SK-N-SH (cell line): ENCODE measurements at regions of chr5 and their contacts with region 1.

Region 1: GRCh38 chr5:139968547-139969261 is 74.4 kb downstream of the NRG2 start:
- DNase-seq: peak; percentile 91
- H3K4me3 ChIP-seq: peak overlapping the region in 1 of 2 experiments; percentile 28; a peak in 1 of 4 replicates
- H3K27ac ChIP-seq: no peak overlapping the region
- H3K4me1 ChIP-seq: peaks cover 0 to 16% of the 10 kb centered on the region in 2 experiments; a peak in 1 of 4 replicates
- H3K27me3 ChIP-seq: no peaks in the 10 kb centered on the region
- CTCF ChIP-seq: peak; percentile 97
- EP300 ChIP-seq: no peak
- RAD21 ChIP-seq: peak; percentile 99

Region 2: DNA sequence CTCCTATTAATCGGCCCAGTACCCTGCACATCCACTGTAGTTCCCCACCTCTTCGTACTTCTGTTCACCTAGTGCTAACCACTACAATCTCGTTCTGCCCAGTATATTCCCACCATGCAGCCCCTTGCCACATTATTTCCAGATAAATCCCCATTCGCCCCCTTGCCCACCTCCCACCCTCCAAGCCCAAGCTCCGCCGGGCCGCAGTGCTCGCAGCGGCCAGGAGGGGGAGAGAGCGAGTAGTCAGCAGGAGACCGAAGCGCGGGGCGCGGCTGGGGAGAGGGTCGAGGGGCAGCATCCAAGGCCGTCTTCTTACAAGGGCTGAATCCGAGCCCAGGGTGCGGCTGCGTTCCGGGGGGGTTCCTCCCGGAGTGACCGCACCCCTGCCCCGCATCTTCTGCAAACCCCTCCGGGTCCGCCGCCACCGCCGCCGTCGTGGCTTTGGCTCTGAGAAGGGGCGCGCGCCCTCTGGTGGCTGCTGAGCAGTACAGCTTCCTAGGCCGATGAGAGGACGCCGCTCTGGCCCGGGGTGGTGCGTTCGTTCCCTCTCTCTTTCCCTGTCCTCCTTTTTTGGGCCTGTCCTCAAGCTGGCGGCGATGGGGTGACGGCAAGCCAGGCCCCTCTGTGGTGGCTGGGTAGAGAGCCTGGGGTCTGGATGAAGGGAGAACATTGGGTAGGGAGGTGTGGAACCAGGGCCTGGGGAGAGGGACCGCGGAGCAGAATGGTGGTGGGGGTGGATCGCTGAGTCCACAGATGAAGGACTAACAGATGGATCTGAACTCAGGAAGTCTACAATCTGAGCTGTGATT is 203.1 kb before region 1 on chr5:
- CTCF ChIA-PET with region 1: interaction called, 96 read pairs
- POLR2A ChIA-PET with region 1: no interaction called
- DNase-seq: peak; percentile 93
- H3K4me3 ChIP-seq: peak overlapping the region; percentile 56 to 85
- H3K27ac ChIP-seq: peak overlapping the region in 1 of 2 experiments; percentile 56; a peak in 1 of 4 replicates
- H3K4me1 ChIP-seq: peaks cover 2 to 29% of the 10 kb centered on the region in 2 experiments; a peak in 3 of 4 replicates
- H3K27me3 ChIP-seq: no peaks in the 10 kb centered on the region
- CTCF ChIP-seq: peak; percentile 97
- EP300 ChIP-seq: peak in 1 of 2 experiments; percentile 14; a peak in 1 of 4 replicates
- RAD21 ChIP-seq: peak; percentile 73

Region 3: GRCh38 chr5:139814675-139815280 is 153.9 kb before region 1 on chr5:
- CTCF ChIA-PET with region 1: interaction called, 14 read pairs
- POLR2A ChIA-PET with region 1: no interaction called
- DNase-seq: peak; percentile 63
- H3K4me3 ChIP-seq: no peak overlapping the region
- H3K27ac ChIP-seq: no peak overlapping the region
- H3K4me1 ChIP-seq: peaks cover 0 to 4% of the 10 kb centered on the region in 2 experiments; a peak in 1 of 4 replicates
- H3K27me3 ChIP-seq: peaks cover 4% of the 10 kb centered on the region; the same call in 1 of the 2 replicates
- CTCF ChIP-seq: no peak
- EP300 ChIP-seq: no peak
- RAD21 ChIP-seq: no peak

Region 4: GRCh38 chr5:139882961-139883539 is 85.7 kb before region 1 on chr5:
- CTCF ChIA-PET with region 1: interaction called, 55 read pairs
- POLR2A ChIA-PET with region 1: no interaction called
- DNase-seq: peak; percentile 55
- H3K4me3 ChIP-seq: no peak overlapping the region
- H3K27ac ChIP-seq: peak overlapping the region in 1 of 2 experiments; percentile 44; a peak in 1 of 4 replicates
- H3K4me1 ChIP-seq: peaks cover 0 to 47% of the 10 kb centered on the region in 2 experiments; a peak in 1 of 4 replicates
- H3K27me3 ChIP-seq: no peaks in the 10 kb centered on the region
- CTCF ChIP-seq: no peak
- EP300 ChIP-seq: no peak
- RAD21 ChIP-seq: no peak

Region 5: GRCh38 chr5:139942243-139942642 is 26.5 kb before region 1 on chr5:
- CTCF ChIA-PET with region 1: interaction called, 17 read pairs
- POLR2A ChIA-PET with region 1: no interaction called
- DNase-seq: no peak
- H3K4me3 ChIP-seq: no peak overlapping the region
- H3K27ac ChIP-seq: no peak overlapping the region
- H3K4me1 ChIP-seq: no peaks in the 10 kb centered on the region; a peak in 1 of 4 replicates
- H3K27me3 ChIP-seq: no peaks in the 10 kb centered on the region
- CTCF ChIP-seq: no peak
- EP300 ChIP-seq: no peak
- RAD21 ChIP-seq: no peak

Region 6: GRCh38 chr5:140005145-140005591 is 36.5 kb after region 1 on chr5:
- CTCF ChIA-PET with region 1: interaction called, 30 read pairs
- POLR2A ChIA-PET with region 1: no interaction called
- DNase-seq: no peak
- H3K4me3 ChIP-seq: no peak overlapping the region
- H3K27ac ChIP-seq: no peak overlapping the region
- H3K4me1 ChIP-seq: peaks cover 0 to 2% of the 10 kb centered on the region in 2 experiments; a peak in 1 of 4 replicates
- H3K27me3 ChIP-seq: no peaks in the 10 kb centered on the region
- CTCF ChIP-seq: no peak
- EP300 ChIP-seq: no peak
- RAD21 ChIP-seq: no peak